ENCODE measurements at regions of chr4 and their contacts with region 1.

Region 1: DNA sequence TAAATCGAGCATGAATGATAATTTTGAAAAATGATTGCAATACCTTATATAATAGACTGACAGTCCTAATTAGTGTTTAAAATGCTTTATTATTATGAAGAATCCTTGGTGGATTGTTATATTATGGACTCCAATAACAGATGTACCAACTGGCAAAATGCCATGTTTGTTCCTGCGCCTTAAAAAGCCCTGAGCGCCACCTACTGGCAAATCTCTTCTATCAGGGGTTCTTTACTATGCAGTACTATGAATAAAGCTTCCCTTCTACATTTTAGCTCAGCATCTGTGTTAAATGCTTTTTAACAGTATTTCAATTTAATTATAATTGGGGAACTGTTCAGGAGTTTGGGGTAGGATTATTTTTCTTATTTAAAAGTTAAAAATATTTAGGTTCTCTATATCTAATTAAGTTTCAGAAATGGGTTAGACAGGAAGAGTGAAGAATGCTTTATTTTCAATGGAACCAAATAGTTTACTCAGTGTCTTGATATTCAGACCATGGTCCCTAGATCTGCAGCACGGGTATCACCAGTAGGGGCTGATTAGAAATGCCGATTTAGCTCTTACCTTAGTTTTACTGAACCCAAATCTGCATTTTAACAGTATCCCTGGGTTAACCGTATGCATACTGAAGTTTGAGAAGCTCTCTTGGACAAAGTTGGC is 20.1 kb downstream of the CFAP97 start:
- DNase-seq: no peak
- ATAC-seq: peak; percentile 94
- H3K4me3 ChIP-seq: no peak overlapping the region
- H3K27ac ChIP-seq: no peak overlapping the region
- H3K4me1 ChIP-seq: no peaks in the 10 kb centered on the region
- H3K27me3 ChIP-seq: no peaks in the 10 kb centered on the region
- CTCF ChIP-seq: peak; percentile 77 to 83 (median 78)
- EP300 ChIP-seq: no peak
- POLR2A ChIP-seq: no peak
- RAD21 ChIP-seq: peak; percentile 93

Region 2: DNA sequence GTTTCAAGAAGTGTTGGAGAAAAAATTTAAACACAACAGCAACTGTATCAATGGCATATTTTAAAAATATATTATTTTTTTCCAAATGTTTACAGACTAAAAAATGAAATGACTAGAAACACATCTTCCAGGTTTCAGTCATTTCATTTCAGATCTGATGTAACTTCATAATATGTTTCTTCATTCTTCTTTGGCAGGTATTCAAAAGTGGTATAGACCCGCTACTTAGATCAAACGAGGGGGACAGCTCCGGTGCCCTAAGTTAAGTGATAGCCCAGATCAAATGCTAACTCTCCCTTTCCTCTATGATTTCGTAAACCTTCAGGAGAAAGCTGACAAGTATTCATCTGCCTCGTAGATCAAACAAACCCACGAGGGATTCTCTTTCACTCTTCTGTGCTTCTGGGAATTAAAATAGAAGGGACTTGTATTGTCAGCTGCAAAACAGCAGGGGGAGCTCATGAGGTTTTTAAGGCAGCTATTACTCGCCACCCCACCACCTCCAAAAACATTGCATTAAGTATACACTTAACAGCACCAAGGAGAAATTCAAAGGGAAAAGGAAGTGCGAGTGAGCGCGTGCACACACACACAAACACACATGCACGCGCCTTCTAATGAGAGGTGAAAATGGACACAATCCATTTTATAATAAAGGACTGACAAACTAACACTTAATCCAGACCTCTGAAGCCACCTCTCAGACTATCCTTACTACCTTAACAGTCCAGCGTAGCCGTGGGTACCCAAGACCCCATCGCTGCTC is 144.1 kb before region 1 on chr4:
- CTCF ChIA-PET with region 1: interaction called, 98 read pairs
- POLR2A ChIA-PET with region 1: no interaction called
- RAD21 ChIA-PET with region 1: interaction called, 14 read pairs
- SMC1A ChIA-PET with region 1: interaction called, 13 read pairs
- in situ Hi-C with region 1: no loop called
- intact Hi-C with region 1: loop called (anchors 1 kb)
- DNase-seq: peak; percentile 23
- ATAC-seq: peak; percentile 83
- H3K4me3 ChIP-seq: no peak overlapping the region
- H3K27ac ChIP-seq: no peak overlapping the region
- H3K4me1 ChIP-seq: no peaks in the 10 kb centered on the region
- H3K27me3 ChIP-seq: no peaks in the 10 kb centered on the region
- CTCF ChIP-seq: peak; percentile 73 to 80 (median 77)
- EP300 ChIP-seq: no peak
- POLR2A ChIP-seq: no peak
- RAD21 ChIP-seq: peak; percentile 74

Region 3: DNA sequence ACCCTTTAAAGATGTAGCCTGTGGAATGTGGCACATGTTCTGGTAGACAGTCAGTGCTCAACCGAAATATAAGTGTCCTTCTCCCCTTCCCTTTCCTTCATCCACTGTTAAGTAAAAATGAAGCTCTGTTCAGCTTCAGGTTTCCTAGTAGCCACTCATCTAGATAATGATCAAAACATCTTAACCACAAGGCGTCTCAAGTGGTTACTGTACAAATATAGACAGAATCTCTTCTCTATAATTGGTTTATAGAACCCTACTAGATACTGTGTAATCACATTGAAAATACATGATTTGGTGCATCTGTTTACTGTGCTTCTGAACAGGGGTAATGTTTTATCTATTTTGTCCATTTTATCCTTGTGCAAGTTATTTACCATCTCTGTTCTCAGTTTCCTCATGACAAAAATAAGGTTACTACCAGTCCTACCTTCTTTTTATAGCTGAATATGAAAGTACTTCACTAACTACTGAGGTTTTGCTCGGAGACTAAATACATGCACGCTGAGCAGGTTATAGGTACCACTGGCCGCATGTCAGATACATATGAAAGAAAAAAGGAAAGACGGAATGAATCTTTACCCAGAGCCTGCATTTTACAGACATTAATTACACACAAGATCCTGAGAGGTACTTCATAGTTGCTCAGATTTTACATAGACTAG is 60.9 kb before region 1 on chr4:
- CTCF ChIA-PET with region 1: interaction called, 10 read pairs
- POLR2A ChIA-PET with region 1: no interaction called
- RAD21 ChIA-PET with region 1: no interaction called
- SMC1A ChIA-PET with region 1: interaction called, 3 read pairs
- in situ Hi-C with region 1: no loop called
- intact Hi-C with region 1: no loop called
- DNase-seq: no peak
- ATAC-seq: peak; percentile 86
- H3K4me3 ChIP-seq: peak overlapping the region; percentile 20; the same call in 1 of the 2 replicates
- H3K27ac ChIP-seq: no peak overlapping the region
- H3K4me1 ChIP-seq: peaks cover 12% of the 10 kb centered on the region
- H3K27me3 ChIP-seq: peaks cover 0 to 3% of the 10 kb centered on the region in 2 experiments; a peak in 2 of 4 replicates
- CTCF ChIP-seq: no peak
- EP300 ChIP-seq: no peak
- POLR2A ChIP-seq: no peak
- RAD21 ChIP-seq: no peak

Region 4: GRCh38 chr4:185142912-185143595 is 40.7 kb before region 1 on chr4 and contains the start of gene SLC25A4:
- CTCF ChIA-PET with region 1: interaction called, 69 read pairs
- POLR2A ChIA-PET with region 1: interaction called, 4 read pairs
- RAD21 ChIA-PET with region 1: interaction called, 31 read pairs
- SMC1A ChIA-PET with region 1: interaction called, 13 read pairs
- in situ Hi-C with region 1: no loop called
- intact Hi-C with region 1: no loop called
- DNase-seq: peak; percentile 50
- ATAC-seq: peak; percentile 99
- H3K4me3 ChIP-seq: peak within 1 kb of the TSS; percentile 80
- H3K27ac ChIP-seq: 0 out of 2 replicates have a peak within 1 kb of the TSS, but pooled peaks have one; percentile 46
- H3K4me1 ChIP-seq: peaks cover 3% of the 10 kb centered on the region; the same call in 1 of the 2 replicates
- H3K27me3 ChIP-seq: no peaks in the 10 kb centered on the region; a peak in 1 of 4 replicates
- CTCF ChIP-seq: peak; percentile 43 to 58 (median 48); a peak in 5 of 6 replicates
- EP300 ChIP-seq: no peak
- POLR2A ChIP-seq: peak; percentile 100
- RAD21 ChIP-seq: no peak
- polyA plus RNA-seq, gene SLC25A4: 17.4 to 35.9 TPM

Region 5: DNA sequence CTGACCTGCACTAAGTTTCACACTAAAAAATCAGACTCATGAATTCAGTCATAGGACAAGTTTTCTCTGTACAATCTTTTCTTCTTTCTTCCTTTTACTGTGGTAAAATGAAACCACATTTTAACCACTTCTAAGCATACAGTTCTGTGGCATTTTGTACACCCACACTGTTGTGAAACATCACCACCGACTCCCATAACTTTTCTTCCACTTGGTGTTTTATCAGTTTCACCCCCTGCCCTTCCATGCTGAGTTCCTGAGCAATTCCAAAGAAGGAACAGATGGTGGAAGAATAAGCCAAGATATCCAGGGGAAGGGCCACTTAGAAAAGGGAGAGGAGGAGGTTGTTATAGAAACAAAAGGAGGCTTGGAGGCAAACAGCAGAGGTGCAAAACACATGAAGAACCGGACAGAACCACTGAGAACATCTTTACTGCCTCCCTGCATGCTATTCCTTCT is 18.1 kb before region 1 on chr4:
- CTCF ChIA-PET with region 1: interaction called, 43 read pairs
- POLR2A ChIA-PET with region 1: no interaction called
- RAD21 ChIA-PET with region 1: interaction called, 6 read pairs
- SMC1A ChIA-PET with region 1: interaction called, 14 read pairs
- in situ Hi-C with region 1: no loop called
- intact Hi-C with region 1: no loop called
- DNase-seq: peak; percentile 74
- ATAC-seq: peak; percentile 98
- H3K4me3 ChIP-seq: no peak overlapping the region
- H3K27ac ChIP-seq: no peak overlapping the region
- H3K4me1 ChIP-seq: peaks cover 17% of the 10 kb centered on the region
- H3K27me3 ChIP-seq: no peaks in the 10 kb centered on the region
- CTCF ChIP-seq: no peak
- EP300 ChIP-seq: peak; percentile 35 to 36; a peak in 2 of 4 replicates
- POLR2A ChIP-seq: no peak
- RAD21 ChIP-seq: no peak

Region 6: GRCh38 chr4:185196437-185196836 is 12.7 kb after region 1 on chr4:
- CTCF ChIA-PET with region 1: interaction called, 21 read pairs
- POLR2A ChIA-PET with region 1: interaction called, 12 read pairs
- RAD21 ChIA-PET with region 1: interaction called, 10 read pairs
- SMC1A ChIA-PET with region 1: interaction called, 13 read pairs
- in situ Hi-C with region 1: no loop called
- intact Hi-C with region 1: no loop called
- DNase-seq: no peak
- ATAC-seq: no peak
- H3K4me3 ChIP-seq: no peak overlapping the region
- H3K27ac ChIP-seq: no peak overlapping the region
- H3K4me1 ChIP-seq: peaks cover 5% of the 10 kb centered on the region; the same call in 1 of the 2 replicates
- H3K27me3 ChIP-seq: no peaks in the 10 kb centered on the region
- CTCF ChIP-seq: no peak
- EP300 ChIP-seq: no peak
- POLR2A ChIP-seq: no peak
- RAD21 ChIP-seq: no peak

Region 7: GRCh38 chr4:185467101-185467500 is 283.4 kb after region 1 on chr4:
- CTCF ChIA-PET with region 1: no interaction called
- POLR2A ChIA-PET with region 1: no interaction called
- RAD21 ChIA-PET with region 1: no interaction called
- SMC1A ChIA-PET with region 1: no interaction called
- in situ Hi-C with region 1: no loop called
- intact Hi-C with region 1: no loop called
- DNase-seq: no peak
- ATAC-seq: no peak
- H3K4me3 ChIP-seq: no peak overlapping the region
- H3K27ac ChIP-seq: no peak overlapping the region
- H3K4me1 ChIP-seq: peaks cover 13% of the 10 kb centered on the region
- H3K27me3 ChIP-seq: peaks cover 0 to 2% of the 10 kb centered on the region in 2 experiments; a peak in 1 of 4 replicates
- CTCF ChIP-seq: no peak
- EP300 ChIP-seq: no peak
- POLR2A ChIP-seq: no peak
- RAD21 ChIP-seq: no peak

Region 8: DNA sequence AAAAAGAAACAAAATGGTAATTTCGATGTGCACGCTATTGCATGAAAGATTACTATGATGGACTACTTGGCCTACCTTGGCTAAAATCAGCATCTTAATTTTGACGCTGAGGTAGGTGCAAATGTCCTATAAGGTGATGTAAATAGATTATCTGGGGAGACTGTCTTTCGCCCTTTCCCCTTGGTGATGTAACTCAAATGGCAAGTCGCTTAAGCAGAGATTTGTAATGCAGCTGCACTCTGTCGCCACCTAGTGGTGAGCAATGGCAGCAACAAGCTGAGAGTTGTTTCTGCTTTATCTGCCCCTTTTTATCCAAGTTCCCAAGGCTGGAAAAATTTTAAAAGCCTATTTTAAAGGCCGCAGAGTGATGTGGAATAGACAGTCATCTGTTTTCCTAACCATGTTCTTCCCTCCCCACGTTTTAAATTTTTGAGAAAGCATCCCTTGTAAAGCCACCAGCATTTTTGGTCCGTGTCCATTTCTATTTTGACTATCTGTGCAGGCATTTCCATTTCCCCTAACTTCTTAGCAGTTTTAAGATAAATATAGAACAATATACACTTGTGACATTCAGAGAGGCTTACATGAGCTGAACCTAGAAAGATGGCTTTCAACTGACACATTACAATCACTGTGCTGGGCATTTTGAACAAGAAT is 413.9 kb after region 1 on chr4:
- CTCF ChIA-PET with region 1: interaction called, 14 read pairs
- POLR2A ChIA-PET with region 1: no interaction called
- RAD21 ChIA-PET with region 1: interaction called, 4 read pairs
- SMC1A ChIA-PET with region 1: no interaction called
- in situ Hi-C with region 1: no loop called
- intact Hi-C with region 1: no loop called
- DNase-seq: peak; percentile 33
- ATAC-seq: peak; percentile 84
- H3K4me3 ChIP-seq: no peak overlapping the region
- H3K27ac ChIP-seq: no peak overlapping the region
- H3K4me1 ChIP-seq: peaks cover 3% of the 10 kb centered on the region; the same call in 1 of the 2 replicates
- H3K27me3 ChIP-seq: no peaks in the 10 kb centered on the region
- CTCF ChIP-seq: peak; percentile 95 to 99 (median 99); a peak in 5 of 6 replicates
- EP300 ChIP-seq: no peak
- POLR2A ChIP-seq: no peak
- RAD21 ChIP-seq: peak; percentile 98